Right cardiac atrium (tissue), 5 donors: ENCODE measurements at regions of chr11 and their contacts with region 1.

Region 1: DNA sequence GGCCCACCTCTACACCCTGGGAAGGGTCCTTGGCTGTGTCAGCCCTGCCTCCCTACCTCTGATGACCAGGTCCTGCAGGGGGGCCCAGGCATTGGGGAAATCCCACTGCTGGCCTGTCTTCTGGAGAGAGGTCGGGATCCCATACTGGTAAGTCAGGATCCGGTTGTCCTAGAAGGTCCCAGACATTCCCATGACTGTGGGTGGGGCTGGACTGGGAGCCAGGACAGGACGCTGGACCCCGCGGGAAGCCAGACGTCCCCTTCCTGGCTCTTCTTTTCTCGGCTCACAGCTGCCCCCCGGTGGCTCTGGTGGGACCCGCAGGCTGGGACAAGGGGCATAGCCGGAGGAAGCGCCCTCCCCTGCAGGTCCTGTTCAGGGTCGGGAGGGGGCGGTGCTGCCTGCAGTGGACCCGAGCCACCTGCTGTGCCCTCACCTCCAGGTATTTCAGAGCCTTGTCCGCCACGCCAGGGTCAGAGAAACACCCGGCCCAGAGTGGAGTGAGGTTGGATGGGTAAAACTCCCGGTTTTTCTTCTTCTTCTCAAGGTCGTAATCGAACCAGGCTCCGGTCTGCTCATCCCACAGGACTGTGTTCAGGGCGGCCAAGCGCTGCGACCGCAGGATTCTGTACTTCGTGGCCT is 20.0 kb downstream of the TREH start:
- DNase-seq: peak; percentile 93 to 98 (median 97)
- ATAC-seq: peak; percentile 80
- H3K4me3 ChIP-seq: no peak overlapping the region
- H3K27ac ChIP-seq: peak overlapping the region; percentile 32
- H3K4me1 ChIP-seq: no peaks in the 10 kb centered on the region
- H3K27me3 ChIP-seq: no peaks in the 10 kb centered on the region

Region 2: GRCh38 chr11:118607401-118608359 is 51.8 kb before region 1 on chr11 and contains the start of gene PHLDB1:
- intact Hi-C with region 1: loop called in 2 of 4 experiments (anchors 5 kb)
- DNase-seq: peak; percentile 80 to 92 (median 91)
- ATAC-seq: peak; percentile 40 to 53
- H3K4me3 ChIP-seq: peak within 1 kb of the TSS; percentile 84
- H3K27ac ChIP-seq: peak within 1 kb of the TSS; percentile 95
- H3K4me1 ChIP-seq: peaks cover 3% of the 10 kb centered on the region
- H3K27me3 ChIP-seq: no peaks in the 10 kb centered on the region
- total RNA-seq, gene PHLDB1: 123 to 177 (median 136) TPM

Region 3: DNA sequence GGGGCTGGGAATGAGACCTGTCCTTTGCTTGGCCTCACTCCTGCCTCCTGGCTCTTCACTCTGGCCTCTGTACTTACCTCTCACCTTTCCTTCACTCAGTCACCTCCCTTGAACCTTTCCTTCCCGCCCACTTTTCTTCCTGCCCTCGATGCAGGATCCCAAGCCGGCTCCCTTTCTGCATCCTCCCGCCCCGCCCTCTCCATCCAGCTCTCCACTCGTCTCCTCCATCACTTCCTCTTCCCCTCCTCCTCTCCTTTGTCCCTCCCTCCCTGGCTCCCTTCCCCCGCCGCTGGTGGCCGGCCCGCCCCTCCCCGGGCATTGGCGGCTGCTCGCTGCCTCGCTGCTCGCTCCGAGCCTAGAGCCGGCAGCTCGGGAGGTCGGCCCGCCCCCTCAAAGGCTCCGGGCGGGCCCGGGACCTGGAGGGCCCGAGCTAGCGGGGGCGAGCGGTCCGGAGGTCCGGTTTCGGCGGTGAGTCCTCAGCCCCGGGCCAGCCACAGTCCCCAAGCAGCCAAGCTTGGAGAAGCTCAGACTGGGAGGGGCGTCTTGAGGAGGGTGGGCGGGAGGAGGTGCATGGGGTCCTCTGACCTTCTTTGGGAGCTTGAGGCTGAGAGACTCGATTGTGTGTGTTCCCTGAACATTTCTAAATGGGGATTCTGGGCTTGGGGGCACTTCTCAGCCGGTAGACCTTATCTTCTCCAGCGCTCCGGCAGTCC is 38.2 kb before region 1 on chr11:
- intact Hi-C with region 1: no loop called
- DNase-seq: peak; percentile 91 to 96 (median 95)
- ATAC-seq: peak; percentile 63 to 68
- H3K4me3 ChIP-seq: peak overlapping the region; percentile 63
- H3K27ac ChIP-seq: peak overlapping the region; percentile 84
- H3K4me1 ChIP-seq: peaks cover 26% of the 10 kb centered on the region
- H3K27me3 ChIP-seq: no peaks in the 10 kb centered on the region

Region 4: GRCh38 chr11:119795231-119795630 is 1135.8 kb after region 1 on chr11:
- intact Hi-C with region 1: no loop called
- DNase-seq: no peak
- ATAC-seq: no peak
- H3K4me3 ChIP-seq: no peak overlapping the region
- H3K27ac ChIP-seq: no peak overlapping the region
- H3K4me1 ChIP-seq: no peaks in the 10 kb centered on the region
- H3K27me3 ChIP-seq: no peaks in the 10 kb centered on the region